Dorsolateral prefrontal cortex (tissue), 120 donors: ENCODE measurements at regions of chr16 and their contacts with region 1.

Region 1: GRCh38 chr16:83744441-83744981 is 63.3 kb upstream of the HSBP1 start:
- DNase-seq: peak in 5 of 10 donors; percentile 24 to 63 (median 50)
- H3K4me3 ChIP-seq: peak overlapping the region in 3 of 59 donors; percentile 3 to 30 (median 28)
- H3K27ac ChIP-seq: peak overlapping the region in 58 of 59 donors; percentile 18 to 95 (median 84)
- H3K27me3 ChIP-seq: peaks cover 0 to 5% (median 0%) of the 10 kb centered on the region in 45 donors
- CTCF ChIP-seq: peak in 2 of 56 donors; percentile 9 to 25

Region 2: DNA sequence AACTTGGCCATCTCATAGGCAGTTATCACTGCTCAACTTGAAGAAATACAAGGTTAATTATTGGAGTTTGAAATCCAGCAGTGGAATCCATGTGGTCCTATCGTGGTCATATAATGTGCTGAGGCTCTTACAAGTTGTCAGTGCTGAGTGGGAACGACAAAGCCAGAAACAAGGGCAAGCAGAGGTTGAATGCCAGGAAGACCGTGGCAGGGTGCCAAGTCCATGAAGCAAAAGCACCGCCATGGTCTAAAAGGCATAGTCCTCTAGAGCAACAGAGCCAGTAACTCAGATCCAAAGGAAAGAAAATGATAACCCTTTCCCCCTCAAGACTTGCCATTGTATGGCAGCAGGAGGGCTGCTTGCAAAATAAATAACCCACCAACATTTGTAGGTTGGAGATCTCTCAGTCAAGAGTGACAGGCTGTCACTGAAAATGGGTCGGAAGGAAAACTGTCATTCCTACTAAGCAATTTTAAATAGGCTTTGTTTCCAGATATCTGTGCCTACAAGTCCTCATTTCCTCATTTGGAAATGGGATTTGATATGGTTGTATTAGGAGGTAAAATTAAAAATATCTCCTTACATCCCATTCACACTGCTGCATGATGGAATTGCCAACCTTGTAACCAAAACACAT is 26.9 kb after region 1 on chr16:
- intact Hi-C with region 1: loop called (anchors 1 to 2 kb)
- DNase-seq: peak in 9 of 10 donors; percentile 21 to 67 (median 61)
- H3K4me3 ChIP-seq: peak overlapping the region in 55 of 59 donors; percentile 1 to 70 (median 48)
- H3K27ac ChIP-seq: peak overlapping the region in 56 of 59 donors; percentile 1 to 100 (median 92)
- H3K27me3 ChIP-seq: no peaks in the 10 kb centered on the region
- CTCF ChIP-seq: no peak

Region 3: GRCh38 chr16:83793184-83793855 is 48.8 kb after region 1 on chr16:
- intact Hi-C with region 1: no loop called
- DNase-seq: no peak
- H3K4me3 ChIP-seq: no peak overlapping the region
- H3K27ac ChIP-seq: no peak overlapping the region
- H3K27me3 ChIP-seq: no peaks in the 10 kb centered on the region
- CTCF ChIP-seq: no peak